Ovary (tissue), 10 donors: ENCODE measurements at regions of chr21 and their contacts with region 1.

Region 1: GRCh38 chr21:40829308-40830175 is 17.4 kb downstream of the DSCAM start:
- DNase-seq: no peak
- H3K4me3 ChIP-seq: no peak overlapping the region
- H3K27ac ChIP-seq: no peak overlapping the region
- H3K4me1 ChIP-seq: no peaks in the 10 kb centered on the region
- H3K27me3 ChIP-seq: no peaks in the 10 kb centered on the region
- CTCF ChIP-seq: no peak
- EP300 ChIP-seq: no peak
- POLR2A ChIP-seq: no peak

Region 2: GRCh38 chr21:40696246-40696645 is 133.3 kb before region 1 on chr21:
- intact Hi-C with region 1: no loop called
- DNase-seq: no peak
- H3K4me3 ChIP-seq: no peak overlapping the region
- H3K27ac ChIP-seq: no peak overlapping the region
- H3K4me1 ChIP-seq: no peaks in the 10 kb centered on the region
- H3K27me3 ChIP-seq: no peaks in the 10 kb centered on the region
- CTCF ChIP-seq: no peak
- EP300 ChIP-seq: no peak
- POLR2A ChIP-seq: no peak

Region 3: DNA sequence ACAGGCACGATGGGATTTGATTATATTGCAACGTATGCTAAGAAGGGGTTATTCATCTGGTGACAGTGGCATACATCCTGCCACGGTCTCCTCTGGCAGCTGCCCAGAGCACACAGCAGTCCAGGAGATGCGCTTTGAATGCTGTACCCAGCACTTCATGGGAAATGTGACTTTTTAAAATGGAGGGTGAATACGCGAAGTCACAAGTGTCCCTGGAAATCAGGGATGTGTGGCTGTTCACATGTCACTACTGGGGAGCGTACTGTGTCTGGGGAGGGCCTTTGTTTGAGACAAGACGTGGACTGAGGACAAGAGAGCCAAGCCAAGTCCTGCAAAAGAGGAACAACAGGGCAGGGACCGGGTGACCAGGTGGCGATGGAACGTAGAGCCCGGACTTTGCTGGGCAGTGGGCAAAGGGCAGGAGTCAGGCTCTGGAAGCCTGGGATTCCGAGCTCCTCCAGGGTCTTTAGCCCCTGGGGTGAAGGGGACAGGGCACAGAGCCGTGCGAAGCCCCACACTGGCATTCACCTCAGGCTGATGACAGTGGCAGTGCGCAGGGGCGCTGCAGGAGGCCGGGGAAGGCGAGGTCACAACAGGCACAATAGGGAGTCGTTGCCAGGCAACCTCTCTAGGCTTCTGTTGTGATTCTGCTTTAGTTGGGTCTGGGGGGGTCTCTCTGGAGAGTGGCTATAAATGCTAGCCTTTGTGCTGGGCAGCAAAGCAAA is 1192.0 kb after region 1 on chr21:
- intact Hi-C with region 1: no loop called
- DNase-seq: no peak
- H3K4me3 ChIP-seq: no peak overlapping the region
- H3K27ac ChIP-seq: no peak overlapping the region
- H3K4me1 ChIP-seq: peaks cover 1% of the 10 kb centered on the region
- H3K27me3 ChIP-seq: no peaks in the 10 kb centered on the region
- CTCF ChIP-seq: no peak
- EP300 ChIP-seq: no peak
- POLR2A ChIP-seq: no peak

Region 4: DNA sequence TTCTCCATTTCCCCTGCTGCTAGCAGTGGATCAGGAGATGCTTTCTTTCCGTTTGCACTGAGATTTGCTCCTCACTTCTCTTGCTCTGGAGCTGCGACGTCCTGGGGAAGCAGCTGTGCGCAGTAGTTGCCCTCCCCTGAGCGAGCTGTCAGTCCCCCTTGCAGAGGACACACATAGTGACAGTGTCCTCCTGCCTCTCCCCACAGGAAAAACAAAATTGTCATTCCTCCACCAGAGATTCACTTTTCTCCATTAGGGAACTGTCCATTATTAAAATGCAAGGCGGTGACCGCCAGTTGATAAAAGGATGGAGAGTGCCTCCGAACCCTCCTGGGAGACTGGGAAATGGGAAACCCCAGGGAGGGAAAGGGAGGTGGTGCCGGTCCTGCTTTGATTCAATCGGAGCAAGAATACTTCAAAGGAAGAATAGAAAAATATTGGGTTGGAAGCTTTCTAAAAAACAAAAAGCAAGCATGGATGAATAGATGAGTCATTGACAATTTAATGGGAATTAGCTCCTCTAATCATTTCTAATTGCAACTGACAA is 1980.5 kb after region 1 on chr21:
- intact Hi-C with region 1: loop called in 1 of 4 experiments (anchors 5 kb)
- DNase-seq: no peak
- H3K4me3 ChIP-seq: no peak overlapping the region
- H3K27ac ChIP-seq: no peak overlapping the region
- H3K4me1 ChIP-seq: no peaks in the 10 kb centered on the region
- H3K27me3 ChIP-seq: no peaks in the 10 kb centered on the region
- CTCF ChIP-seq: no peak
- EP300 ChIP-seq: no peak
- POLR2A ChIP-seq: no peak